Left colon (tissue), 2 donors: ENCODE measurements at regions of chr1 and their contacts with region 1.

Region 1: DNA sequence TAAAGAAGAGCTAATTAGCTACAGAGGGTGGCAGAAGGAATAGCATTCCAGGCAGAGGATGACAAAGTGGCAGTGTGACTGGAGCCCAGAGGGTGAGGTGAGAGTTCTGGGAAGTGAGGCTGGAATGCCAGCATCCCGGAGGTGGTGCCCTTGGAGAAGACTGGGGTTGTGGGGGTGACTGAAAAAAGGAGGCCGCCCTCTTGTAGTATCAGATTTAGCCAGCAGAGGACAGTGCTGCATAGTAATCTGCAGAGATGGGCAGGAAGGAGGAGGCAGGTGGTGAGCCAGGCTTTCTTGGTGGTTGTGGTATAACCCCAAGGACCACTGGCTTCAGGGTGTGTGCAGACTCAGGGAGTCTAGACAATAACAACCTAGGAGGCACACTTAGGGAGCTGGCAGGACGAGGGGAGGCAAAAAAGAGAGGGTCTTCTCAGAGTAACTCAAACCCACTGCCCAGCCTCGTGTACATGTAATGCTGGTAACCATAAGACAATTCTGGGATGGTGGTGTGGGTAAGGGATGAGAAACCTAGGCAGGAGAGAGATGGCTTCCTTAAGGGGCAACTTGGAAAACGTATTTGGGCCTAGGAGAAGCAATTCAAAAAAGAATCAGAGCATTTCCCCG is 30.5 kb downstream of the MROH7 start:
- DNase-seq: peak in 1 of 2 donors; percentile 68
- ATAC-seq: peak; percentile 89

Region 2: GRCh38 chr1:54488779-54489626 is 183.1 kb before region 1 on chr1:
- intact Hi-C with region 1: no loop called
- DNase-seq: peak; percentile 72 to 82
- ATAC-seq: peak; percentile 66

Region 3: GRCh38 chr1:54721719-54722118 is 49.6 kb after region 1 on chr1:
- intact Hi-C with region 1: no loop called
- DNase-seq: no peak
- ATAC-seq: no peak

Region 4: DNA sequence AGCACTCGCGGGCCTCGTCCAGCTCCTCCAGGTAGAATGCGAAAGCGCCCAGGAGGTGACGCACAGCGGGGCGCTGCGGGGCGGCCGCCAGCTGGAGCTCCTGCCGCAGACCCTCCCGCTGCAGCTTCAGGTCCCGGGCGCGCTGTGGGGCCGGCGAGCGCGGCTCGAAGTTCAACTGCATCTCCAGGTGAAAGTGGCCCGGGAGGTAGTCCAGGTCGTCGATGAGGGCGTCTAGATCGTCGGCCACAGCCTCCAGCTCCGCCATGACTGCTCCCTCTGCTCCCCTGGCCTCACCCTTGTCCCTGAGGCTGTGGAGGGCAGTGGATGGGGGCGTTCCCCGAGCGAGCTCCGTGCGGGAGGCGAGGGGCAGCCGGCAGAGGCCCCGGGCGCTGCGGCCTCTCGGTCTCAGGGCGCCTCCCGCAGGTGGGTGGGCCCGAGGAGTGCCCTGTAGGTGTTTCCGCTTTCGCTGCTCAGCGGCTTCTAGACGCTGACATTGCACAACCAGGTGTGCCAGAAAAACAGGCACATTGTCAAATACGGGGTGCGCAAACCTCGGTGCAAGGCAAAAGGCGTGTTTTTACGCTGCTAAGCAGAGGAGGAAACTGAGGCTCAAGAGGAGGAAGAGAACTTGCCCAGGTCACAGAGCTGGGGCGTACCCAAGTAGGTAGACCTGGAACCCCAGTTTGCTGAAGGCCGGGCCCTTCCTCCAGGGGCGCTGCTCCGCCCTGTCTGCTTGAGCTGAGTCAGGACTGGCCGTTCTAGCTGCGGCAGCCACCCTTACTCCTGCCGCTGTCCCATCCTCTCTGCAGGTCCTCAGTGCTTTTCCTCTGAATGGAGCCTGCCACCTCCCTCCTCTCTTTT is 129.0 kb after region 1 on chr1 and contains the start of gene TTC22:
- intact Hi-C with region 1: loop called in 1 of 2 experiments (anchors 5 kb)
- DNase-seq: peak; percentile 86
- ATAC-seq: peak; percentile 64
- total RNA-seq, gene TTC22: 88.7 to 94.5 TPM